Activated CD4-positive, alpha-beta memory T cell treated with anti-CD3 and anti-CD28 coated beads, Interleukin-2, amount 10 ng/mL, durations not matched to agents 7 days and 5 days (primary cell): ENCODE measurements at regions of chr10 and their contacts with region 1.

Region 1: GRCh38 chr10:119305860-119306513 is 98.6 kb downstream of the GRK5 start:
- DNase-seq: peak; percentile 92
- H3K4me3 Mint-ChIP-seq: peak overlapping the region; percentile 83
- H3K27ac Mint-ChIP-seq: peak overlapping the region; percentile 100
- H3K4me1 Mint-ChIP-seq: peaks cover 81% of the 10 kb centered on the region
- H3K27me3 Mint-ChIP-seq: peaks cover 14% of the 10 kb centered on the region

Region 2: GRCh38 chr10:119199231-119199992 is 106.6 kb before region 1 on chr10:
- CTCF ChIA-PET with region 1: interaction called, 10 read pairs
- POLR2A ChIA-PET with region 1: interaction called, 3 read pairs
- DNase-seq: peak; percentile 53
- H3K4me3 Mint-ChIP-seq: no peak overlapping the region
- H3K27ac Mint-ChIP-seq: no peak overlapping the region
- H3K4me1 Mint-ChIP-seq: peaks cover 22% of the 10 kb centered on the region
- H3K27me3 Mint-ChIP-seq: peaks cover 2% of the 10 kb centered on the region

Region 3: GRCh38 chr10:119270762-119271366 is 35.1 kb before region 1 on chr10:
- CTCF ChIA-PET with region 1: interaction called, 15 read pairs
- POLR2A ChIA-PET with region 1: interaction called, 30 read pairs
- DNase-seq: peak; percentile 64
- H3K4me3 Mint-ChIP-seq: peak overlapping the region; percentile 24
- H3K27ac Mint-ChIP-seq: peak overlapping the region; percentile 91
- H3K4me1 Mint-ChIP-seq: peaks cover 58% of the 10 kb centered on the region
- H3K27me3 Mint-ChIP-seq: no peaks in the 10 kb centered on the region

Region 4: GRCh38 chr10:119281581-119282071 is 24.4 kb before region 1 on chr10:
- CTCF ChIA-PET with region 1: interaction called, 10 read pairs
- POLR2A ChIA-PET with region 1: interaction called, 12 read pairs
- DNase-seq: no peak
- H3K4me3 Mint-ChIP-seq: no peak overlapping the region
- H3K27ac Mint-ChIP-seq: no peak overlapping the region
- H3K4me1 Mint-ChIP-seq: peaks cover 52% of the 10 kb centered on the region
- H3K27me3 Mint-ChIP-seq: no peaks in the 10 kb centered on the region

Region 5: DNA sequence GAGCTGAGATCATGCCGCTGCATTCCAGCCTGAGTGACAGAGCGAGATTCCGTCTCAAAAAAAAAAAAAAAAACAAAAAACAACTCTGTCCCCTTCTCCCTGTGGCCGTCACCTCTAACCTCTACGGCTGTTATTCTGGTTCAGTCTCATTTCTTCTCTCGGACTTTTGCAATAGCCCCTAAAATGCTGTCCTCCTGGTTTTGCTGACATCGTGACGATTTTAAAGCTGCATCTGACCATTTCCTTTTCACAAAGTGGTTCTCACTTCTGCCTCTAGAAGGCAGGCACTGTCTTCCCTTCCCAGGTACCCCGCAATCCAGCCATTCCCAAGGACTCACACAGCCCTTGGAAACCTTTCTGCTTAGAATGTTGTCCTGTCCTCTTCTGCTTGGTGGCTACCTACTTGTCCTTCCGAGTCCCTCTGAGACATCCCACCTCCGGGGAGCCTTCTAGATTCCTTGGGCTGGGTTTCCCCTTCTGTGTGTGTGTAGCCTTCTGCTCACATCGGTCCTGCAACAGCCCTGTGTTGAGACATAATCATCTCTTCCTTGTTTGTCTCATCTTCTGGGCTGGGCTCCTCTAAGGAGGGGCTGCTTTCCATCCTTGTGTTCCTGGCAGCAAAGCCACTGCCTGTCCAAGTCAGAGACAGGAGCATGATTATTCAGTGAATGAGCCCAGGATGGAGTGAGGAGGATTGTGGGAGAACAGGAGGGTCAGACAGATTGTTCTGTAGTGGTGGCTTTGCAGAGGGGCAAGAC is 15.5 kb before region 1 on chr10:
- CTCF ChIA-PET with region 1: interaction called, 10 read pairs
- POLR2A ChIA-PET with region 1: interaction called, 20 read pairs
- DNase-seq: no peak
- H3K4me3 Mint-ChIP-seq: no peak overlapping the region
- H3K27ac Mint-ChIP-seq: peak overlapping the region; percentile 52
- H3K4me1 Mint-ChIP-seq: peaks cover 65% of the 10 kb centered on the region
- H3K27me3 Mint-ChIP-seq: no peaks in the 10 kb centered on the region